BJ (cell line): ENCODE measurements at regions of chr4 and their contacts with region 1.

Region 1: DNA sequence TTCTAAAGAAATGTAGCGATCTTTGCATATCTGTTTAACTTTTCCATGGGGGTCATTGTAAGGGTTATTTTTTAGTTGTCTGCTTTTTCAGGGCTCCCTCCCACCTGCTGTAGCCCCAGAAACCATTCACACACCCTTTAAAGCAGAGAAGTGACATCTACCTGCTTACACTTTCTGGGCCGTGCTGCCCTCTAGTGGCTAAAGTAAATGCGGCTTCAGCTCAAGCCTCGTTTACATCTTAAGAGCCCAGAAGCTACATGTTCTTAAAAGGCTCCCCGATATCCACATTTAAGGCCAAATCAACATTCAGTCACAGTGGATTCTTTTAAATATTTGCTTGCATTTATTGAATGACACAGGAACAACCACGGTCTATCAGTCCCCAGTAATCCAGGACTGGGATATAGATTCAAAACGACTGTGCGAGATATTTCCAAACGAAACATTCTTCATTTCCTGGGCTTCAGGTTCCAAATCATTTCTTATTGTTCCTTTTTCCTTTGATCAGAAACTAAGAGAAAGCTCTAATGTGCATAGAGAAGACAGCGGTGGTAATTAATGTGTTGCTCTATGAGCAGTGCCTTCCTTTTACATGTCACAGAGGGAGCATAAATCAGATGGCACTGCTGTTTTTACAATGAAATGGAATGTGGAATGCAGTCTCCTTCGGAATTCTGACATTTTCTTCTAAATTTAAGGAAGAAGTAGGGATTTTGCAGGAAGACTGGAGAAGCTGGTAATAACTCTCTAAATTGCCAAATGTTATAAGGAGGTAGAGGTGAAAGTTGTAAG is 119.9 kb downstream of the RASGEF1B start:
- DNase-seq: no peak
- H3K4me3 ChIP-seq: no peak overlapping the region
- H3K27me3 ChIP-seq: no peaks in the 10 kb centered on the region
- CTCF ChIP-seq: peak; percentile 88

Region 2: DNA sequence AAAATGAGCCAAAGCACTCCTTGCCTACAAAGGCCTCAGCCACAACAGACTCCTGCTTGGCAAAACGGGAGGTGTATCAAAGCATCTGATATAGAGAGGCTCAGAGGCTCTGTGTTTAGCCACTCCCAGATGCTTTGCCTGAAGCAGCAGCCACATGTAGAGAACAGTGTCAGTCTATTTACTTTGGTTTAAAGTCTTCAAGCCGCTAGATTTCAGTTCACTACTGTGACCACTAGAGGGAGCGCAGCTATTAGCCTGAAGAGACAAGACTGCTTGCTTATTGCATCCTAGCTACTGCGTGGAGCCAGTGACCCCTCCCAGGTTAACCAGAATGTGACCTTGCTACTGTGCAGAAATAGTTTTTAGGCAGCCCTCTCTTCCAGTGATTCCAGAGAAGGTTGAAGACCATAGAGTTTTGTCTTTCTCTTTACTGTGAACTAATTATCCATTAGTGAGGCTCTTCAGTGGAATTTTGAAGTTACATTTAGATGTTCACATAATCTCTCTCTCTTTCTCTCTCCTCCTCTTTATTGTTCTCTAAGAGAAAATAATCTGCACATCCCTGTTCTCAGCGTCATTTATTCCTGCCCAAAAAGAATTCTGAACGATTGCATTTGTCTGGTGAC is 282.0 kb before region 1 on chr4:
- CTCF ChIA-PET with region 1: interaction called, 114 read pairs
- POLR2A ChIA-PET with region 1: no interaction called
- DNase-seq: peak; percentile 38
- H3K4me3 ChIP-seq: no peak overlapping the region
- H3K27me3 ChIP-seq: peaks cover 1% of the 10 kb centered on the region; the same call in 1 of the 2 replicates
- CTCF ChIP-seq: peak; percentile 91

Region 3: GRCh38 chr4:81084029-81084428 is 267.8 kb before region 1 on chr4:
- CTCF ChIA-PET with region 1: interaction called, 42 read pairs
- POLR2A ChIA-PET with region 1: no interaction called
- DNase-seq: no peak
- H3K4me3 ChIP-seq: no peak overlapping the region
- H3K27me3 ChIP-seq: no peaks in the 10 kb centered on the region
- CTCF ChIP-seq: peak; percentile 52

Region 4: GRCh38 chr4:81093720-81094401 is 258.0 kb before region 1 on chr4:
- CTCF ChIA-PET with region 1: interaction called, 11 read pairs
- POLR2A ChIA-PET with region 1: no interaction called
- DNase-seq: no peak
- H3K4me3 ChIP-seq: no peak overlapping the region
- H3K27me3 ChIP-seq: no peaks in the 10 kb centered on the region
- CTCF ChIP-seq: no peak

Region 5: DNA sequence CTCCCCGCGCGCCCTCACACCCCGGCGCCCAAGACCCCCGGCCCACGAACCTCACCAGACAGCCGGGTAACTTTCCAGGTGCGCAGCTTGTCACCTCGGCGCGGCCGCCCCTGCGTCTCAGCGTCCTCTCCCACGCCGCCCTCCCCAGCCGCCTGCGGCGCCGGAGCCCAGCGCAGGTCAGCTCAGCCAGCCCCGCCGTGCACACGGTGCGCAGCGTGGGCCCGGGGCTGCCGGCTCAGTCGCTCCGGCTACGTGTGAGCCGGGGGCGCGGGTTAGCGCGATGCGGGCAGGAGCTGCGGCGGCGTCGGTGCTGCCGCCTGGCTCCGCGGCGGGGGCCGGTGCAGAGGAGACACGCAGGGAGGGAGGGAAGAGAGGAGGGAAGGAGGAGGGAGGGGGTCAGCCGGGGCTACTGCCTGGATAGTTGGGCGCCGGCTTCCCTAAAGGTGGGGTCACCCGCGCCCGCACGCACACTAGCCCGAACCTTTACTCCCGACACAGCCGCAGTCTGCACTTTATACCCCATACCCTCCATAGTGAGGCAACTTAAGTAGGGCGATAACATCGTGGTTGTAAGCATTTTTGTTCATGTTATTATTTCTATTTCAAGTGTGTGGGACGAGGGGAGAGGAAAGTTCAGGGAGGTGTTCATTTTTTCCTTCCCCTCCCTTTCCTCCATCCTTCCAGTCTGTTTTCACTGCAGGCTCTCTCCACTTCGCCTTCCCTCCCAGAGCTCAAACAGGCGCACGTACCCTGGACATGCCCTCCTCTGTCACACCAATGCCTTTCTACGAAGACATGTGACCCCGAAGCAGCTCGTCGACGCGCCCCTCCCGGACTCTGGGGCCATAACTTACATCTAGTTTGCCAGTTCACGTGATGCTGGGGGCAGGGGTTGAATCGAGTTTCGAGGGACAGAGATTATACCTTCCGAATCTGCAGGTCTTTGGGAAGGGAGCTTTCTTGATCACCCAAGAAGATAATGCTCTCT is 136.7 kb before region 1 on chr4 and contains the start of gene PRKG2:
- CTCF ChIA-PET with region 1: interaction called, 10 read pairs
- POLR2A ChIA-PET with region 1: no interaction called
- DNase-seq: no peak
- H3K4me3 ChIP-seq: peak within 1 kb of the TSS; percentile 52
- H3K27me3 ChIP-seq: peaks cover 21% of the 10 kb centered on the region
- CTCF ChIP-seq: no peak
- polyA plus RNA-seq, gene PRKG2: 0.16 and 0.47 TPM in 2 replicates

Region 6: DNA sequence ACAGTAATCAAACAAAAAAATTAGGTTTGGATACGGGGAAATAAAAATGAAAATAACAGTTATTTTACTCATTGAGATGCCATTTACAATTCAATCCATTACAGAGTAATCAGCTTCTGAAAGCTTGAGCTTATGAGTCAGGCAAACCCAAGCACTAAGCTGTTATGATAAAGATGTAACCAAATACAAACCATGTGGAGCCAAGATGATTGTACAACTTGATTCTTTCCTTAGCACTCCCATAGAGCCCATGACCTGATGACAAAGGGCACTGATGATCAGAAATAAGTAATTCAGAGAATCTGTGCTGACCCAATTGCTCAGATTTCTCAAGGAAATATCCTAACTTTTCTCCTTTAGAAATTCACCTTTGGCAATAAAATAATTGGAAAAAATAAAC is 96.3 kb before region 1 on chr4:
- CTCF ChIA-PET with region 1: interaction called, 19 read pairs
- POLR2A ChIA-PET with region 1: no interaction called
- DNase-seq: peak; percentile 50
- H3K4me3 ChIP-seq: no peak overlapping the region
- H3K27me3 ChIP-seq: no peaks in the 10 kb centered on the region
- CTCF ChIP-seq: no peak

Region 7: GRCh38 chr4:81260443-81261101 is 91.3 kb before region 1 on chr4:
- CTCF ChIA-PET with region 1: interaction called, 19 read pairs
- POLR2A ChIA-PET with region 1: no interaction called
- DNase-seq: no peak
- H3K4me3 ChIP-seq: no peak overlapping the region
- H3K27me3 ChIP-seq: no peaks in the 10 kb centered on the region
- CTCF ChIP-seq: peak; percentile 47

Region 8: DNA sequence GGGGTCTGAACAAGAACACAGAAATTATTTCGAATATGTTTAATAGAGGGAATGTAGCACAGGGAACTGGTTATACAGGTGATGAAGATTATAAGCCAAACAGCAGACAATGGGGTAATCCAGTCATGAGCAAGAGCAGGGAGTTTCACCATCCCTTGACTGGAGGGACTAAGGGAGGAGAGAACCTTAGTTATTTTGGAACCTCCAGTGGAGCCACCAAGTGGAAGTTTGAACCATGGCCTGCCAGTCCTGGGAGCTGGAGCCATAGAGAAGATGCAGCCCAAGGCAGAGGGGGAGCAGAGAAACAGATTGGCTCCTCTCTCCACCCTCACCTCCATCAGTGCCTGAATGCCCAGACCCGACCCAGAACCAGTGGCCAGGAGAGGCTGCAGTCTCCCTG is 384.5 kb after region 1 on chr4:
- CTCF ChIA-PET with region 1: no interaction called
- POLR2A ChIA-PET with region 1: no interaction called
- DNase-seq: no peak
- H3K4me3 ChIP-seq: no peak overlapping the region
- H3K27me3 ChIP-seq: no peaks in the 10 kb centered on the region
- CTCF ChIP-seq: no peak